ENCODE measurements at regions of chr2 and their contacts with region 1.

Region 1: DNA sequence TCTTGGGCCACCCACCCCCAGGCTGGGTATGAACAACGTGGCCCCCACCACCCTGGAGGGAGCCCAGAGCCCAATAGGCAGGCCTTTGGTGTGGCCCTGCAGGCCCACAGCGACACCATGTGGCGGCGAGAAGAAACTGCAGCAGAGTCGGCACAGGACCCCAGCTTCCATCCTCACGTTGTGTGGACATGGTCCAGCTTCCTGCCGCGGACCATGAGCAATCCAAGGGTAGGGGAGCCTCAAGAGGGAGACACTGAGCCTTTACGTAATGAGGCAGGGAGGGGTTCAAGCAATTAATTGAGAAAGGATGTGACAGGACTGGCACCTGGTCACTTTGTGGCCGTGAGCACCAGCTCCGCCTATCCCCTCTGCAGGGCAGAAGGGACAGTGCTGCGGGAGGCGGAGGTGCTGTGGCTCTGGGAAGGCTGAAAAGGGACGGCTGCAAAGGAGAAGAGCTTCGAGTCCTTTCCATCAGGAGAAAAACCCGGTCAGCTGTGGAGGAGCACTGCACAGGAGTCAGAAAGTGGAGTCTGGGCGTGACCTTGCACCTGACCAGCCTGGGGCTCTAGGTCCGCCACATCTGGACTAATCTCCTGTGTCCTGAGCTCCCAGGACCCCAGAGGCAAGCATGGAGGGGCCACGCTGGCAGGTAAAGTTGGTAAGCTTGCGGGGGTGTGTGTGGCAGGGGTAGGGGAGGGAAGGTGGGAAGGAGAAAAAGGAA is 44.8 kb downstream of the TMEM37 start:
- DNase-seq: peak; percentile 72

Region 2: DNA sequence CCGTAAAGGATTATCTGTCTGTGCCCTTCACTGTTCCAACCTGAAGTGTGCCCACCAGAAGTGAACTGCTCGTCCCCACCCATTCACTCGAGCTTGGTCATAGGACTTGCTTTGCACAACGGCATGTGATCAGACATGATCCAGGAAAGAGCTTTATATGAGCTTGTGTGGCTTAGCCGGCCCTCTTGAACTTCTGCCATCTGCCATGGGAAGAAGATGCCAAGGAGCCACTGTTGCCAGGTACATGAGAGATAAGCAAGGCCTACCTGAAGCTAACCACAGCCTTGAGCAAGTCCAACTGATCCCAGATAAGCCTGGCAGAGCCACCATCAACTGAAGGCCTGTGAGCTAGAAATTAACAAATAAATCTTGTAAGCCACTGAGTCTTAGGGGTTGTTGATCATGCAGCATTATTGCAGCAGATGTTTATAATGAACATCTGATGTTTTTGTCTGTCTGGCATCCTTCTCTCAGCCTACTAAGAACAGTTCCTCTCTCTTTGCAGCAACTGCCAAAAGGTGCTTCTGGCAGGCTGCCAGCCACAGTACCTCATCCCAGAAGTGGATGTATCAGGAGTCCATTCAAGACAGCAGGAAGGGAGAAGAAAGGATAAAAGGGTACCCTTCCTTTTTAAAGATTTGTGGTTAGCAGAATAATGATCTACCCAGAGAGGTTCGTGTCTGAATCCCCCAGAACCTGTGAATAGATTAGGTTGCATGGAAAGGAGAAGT is 92.9 kb before region 1 on chr2:
- in situ Hi-C with region 1: no loop called
- DNase-seq: no peak

Region 3: GRCh38 chr2:119407430-119408220 is 68.8 kb before region 1 on chr2:
- in situ Hi-C with region 1: loop called (anchors 10 kb)
- DNase-seq: peak; percentile 56

Region 4: DNA sequence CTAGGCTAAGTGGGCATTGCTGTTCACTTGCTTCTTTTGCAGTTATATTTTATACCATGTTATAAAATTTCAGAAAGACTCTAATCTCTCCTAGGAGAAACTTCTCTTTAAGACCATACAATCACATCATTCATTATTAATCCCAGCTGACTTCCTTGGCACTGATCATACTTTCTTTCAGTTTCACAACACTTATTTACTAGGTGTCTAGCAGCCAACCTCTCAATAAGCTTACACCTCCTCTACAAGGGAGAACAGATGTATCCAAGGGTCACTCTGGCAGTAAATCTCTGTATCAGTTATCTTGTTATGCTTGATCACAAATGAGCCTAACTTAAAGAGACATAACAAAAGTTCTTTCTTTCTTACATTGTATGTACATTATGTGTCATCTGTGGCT is 466.6 kb after region 1 on chr2:
- in situ Hi-C with region 1: no loop called
- DNase-seq: no peak

Measured in Caki2 (cell line).